Prostate gland (tissue), 2 donors: ENCODE measurements at regions of chr11 and their contacts with region 1.

Region 1: DNA sequence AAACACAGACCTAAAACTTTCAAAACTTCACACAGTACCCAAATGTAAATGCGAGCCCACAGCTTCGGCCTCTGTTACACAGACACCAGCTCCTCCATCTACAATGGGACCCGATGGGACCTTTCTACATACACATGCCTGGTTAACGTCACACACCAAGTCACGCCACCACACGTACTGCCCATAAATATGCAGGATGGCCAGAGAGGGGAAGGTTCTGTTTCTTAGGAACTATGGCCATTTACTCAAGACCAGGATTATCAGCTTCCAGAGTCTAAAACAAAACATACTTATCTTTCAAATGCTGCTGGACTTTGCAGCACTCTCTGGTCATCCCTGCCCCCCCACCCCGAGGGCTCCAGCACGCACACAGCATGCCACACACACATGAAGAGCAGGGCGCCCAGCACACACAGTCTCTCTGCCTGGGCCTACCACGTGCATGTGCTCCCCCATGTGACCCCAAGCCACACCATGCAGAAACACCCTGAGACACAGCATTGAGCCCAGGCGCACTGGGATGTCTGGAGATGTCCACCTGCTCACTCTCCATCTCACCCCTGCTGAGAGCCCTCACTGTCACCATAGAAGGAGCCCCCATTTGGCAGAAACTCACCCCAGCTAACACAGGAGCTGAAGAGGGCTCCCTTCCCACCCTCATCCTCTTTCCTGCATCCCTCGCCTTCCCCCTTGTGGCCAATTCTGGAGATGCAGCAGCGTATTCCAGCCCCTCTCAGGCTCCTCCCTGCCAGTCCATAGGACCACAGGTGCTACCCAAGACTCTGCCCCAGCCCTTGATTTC is 61.8 kb downstream of the SLC22A12 start:
- DNase-seq: peak; percentile 58
- H3K4me3 ChIP-seq: no peak overlapping the region
- H3K27ac ChIP-seq: no peak overlapping the region
- H3K4me1 ChIP-seq: no peaks in the 10 kb centered on the region
- H3K27me3 ChIP-seq: no peaks in the 10 kb centered on the region
- CTCF ChIP-seq: peak; percentile 57 to 90 (median 82)
- POLR2A ChIP-seq: no peak

Region 2: DNA sequence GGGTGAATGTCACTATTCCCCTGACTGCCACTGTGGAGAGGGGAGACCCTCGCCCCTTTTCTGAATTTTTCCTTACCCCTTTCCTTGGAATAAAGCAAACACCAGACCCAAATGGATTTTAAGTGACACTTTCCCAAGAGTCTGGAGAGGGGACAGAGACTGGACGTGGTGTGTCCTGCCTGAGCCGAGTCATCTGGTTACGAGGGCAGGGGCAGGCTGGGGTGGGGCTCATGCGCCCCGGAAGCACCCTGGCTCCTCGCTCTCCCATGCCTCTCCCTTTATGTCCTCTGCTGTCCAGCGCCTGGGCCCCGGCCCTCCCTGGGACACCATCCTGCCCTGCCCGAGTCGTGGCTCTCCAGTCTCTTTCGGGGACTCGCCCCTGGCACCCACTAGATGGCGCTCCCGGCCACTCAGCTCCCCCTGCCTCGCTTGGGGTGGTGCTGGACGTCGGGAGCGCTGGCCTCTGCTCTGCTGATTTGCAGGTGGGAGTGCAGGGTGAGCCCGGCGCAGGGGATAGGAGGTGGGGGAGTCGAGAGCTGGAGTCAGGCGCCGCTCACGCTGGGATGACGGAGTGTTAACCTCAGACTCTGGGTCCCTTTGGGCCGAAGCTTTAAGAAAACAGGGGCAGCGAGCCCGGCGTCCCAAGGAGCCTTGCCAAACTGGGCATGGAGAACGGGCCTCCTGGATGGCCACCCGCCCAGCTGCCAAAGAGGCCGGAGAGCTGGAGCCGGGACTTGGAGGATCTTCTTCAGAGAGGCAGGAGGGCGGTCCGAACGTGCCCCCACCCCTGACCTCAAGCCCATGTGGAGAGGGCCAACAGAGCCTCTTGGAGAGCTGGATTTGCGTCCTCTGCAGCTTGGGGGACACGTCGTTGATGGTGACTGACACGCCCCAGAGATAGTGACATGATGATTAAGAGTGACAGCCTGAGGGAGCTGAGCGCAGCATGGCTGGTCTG is 203.9 kb before region 1 on chr11:
- intact Hi-C with region 1: loop called (anchors 2 kb)
- DNase-seq: peak; percentile 73
- H3K4me3 ChIP-seq: peak overlapping the region; percentile 17 to 18
- H3K27ac ChIP-seq: peak overlapping the region; percentile 65 to 72
- H3K4me1 ChIP-seq: peaks cover 12% of the 10 kb centered on the region
- H3K27me3 ChIP-seq: no peaks in the 10 kb centered on the region
- CTCF ChIP-seq: peak; percentile 61 to 85 (median 84)
- POLR2A ChIP-seq: no peak

Region 3: GRCh38 chr11:64553551-64554201 is 99.1 kb before region 1 on chr11:
- intact Hi-C with region 1: loop called (anchors 1 kb)
- DNase-seq: peak; percentile 43
- H3K4me3 ChIP-seq: no peak overlapping the region
- H3K27ac ChIP-seq: peak overlapping the region; percentile 26 to 50
- H3K4me1 ChIP-seq: no peaks in the 10 kb centered on the region
- H3K27me3 ChIP-seq: no peaks in the 10 kb centered on the region
- CTCF ChIP-seq: peak; percentile 92 to 98 (median 95)
- POLR2A ChIP-seq: no peak